ENCODE measurements at regions of chr15 and their contacts with region 1.

Region 1: DNA sequence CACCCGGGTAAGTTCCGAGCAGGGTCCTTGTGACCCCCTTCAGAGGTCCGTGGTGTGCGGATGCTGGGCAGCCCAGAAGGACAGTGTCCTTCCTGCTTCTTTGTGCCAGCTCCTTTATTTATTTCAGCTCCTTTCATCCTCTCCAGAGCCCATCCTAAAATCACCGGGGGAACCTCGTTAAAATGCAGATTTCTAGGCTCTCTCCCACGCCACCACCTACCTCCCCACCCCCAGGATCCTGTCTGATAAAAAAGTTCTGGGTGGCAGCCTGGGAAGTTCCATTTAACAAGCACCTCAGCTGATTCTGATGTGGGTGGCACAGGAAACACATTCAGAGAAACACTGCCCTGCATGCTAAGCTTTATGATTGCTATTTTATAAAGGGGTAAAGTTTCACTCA is 12.5 kb upstream of the IGF1R start:
- DNase-seq: no peak
- H3K4me3 ChIP-seq: no peak overlapping the region
- H3K27ac ChIP-seq: no peak overlapping the region
- H3K4me1 ChIP-seq: no peaks in the 10 kb centered on the region
- H3K27me3 ChIP-seq: no peaks in the 10 kb centered on the region
- CTCF ChIP-seq: no peak
- EP300 ChIP-seq: no peak
- POLR2A ChIP-seq: no peak
- RAD21 ChIP-seq: no peak

Region 2: DNA sequence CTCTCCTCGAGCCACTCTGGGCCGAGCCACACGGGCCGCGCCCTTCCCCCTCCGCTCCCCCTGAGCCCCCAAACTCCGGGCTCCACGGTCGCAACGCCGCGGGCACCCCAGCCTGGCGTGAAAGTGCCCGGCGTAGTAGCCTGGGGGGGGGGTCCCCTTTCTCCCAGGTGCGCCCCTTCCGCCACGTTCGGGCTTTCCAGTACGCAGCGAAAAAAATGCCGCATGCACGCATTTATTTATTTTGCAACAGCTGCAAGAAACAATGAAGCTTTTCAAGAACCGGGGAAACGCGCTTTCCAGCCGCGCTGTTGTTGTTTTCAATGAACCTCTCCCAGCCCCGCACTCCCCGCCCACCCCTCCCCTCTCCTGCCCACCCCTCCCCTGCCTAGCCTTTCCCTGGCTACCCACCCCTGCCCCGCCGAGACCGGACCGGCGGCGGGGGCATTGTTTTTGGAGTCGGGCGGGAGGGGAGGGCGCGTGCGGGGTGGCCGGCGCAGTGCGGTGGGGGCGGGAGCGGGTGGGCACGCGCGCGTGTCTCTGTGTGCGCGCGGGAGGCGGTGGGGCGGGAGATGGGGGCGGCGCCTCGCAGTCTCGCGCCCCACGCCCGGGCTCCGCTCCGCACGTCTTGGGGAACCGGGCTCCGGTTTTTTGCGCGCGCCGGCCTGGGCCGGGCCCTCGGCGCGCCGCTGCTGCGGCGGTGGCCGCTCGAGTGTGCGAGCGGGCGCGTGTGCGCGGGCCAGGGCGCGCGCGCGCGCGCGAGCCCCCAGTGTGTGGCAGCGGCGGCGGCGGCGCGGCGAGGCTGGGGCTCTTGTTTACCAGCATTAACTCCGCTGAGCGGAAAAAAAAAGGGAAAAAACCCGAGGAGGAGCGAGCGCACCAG is 12.2 kb after region 1 on chr15 and contains the start of gene IGF1R:
- CTCF ChIA-PET with region 1: interaction called, 14 read pairs
- POLR2A ChIA-PET with region 1: interaction called, 8 read pairs
- DNase-seq: peak in 1 of 2 experiments; percentile 89
- H3K4me3 ChIP-seq: peak within 1 kb of the TSS; percentile 64 to 89 (median 83)
- H3K27ac ChIP-seq: peak within 1 kb of the TSS; percentile 85
- H3K4me1 ChIP-seq: peaks cover 1 to 6% (median 4%) of the 10 kb centered on the region in 4 experiments; a peak in 3 of 7 replicates
- H3K27me3 ChIP-seq: no peaks in the 10 kb centered on the region
- CTCF ChIP-seq: no peak
- EP300 ChIP-seq: no peak
- POLR2A ChIP-seq: no peak
- RAD21 ChIP-seq: no peak
- total RNA-seq, gene IGF1R: 106 and 109 TPM in 2 replicates

Region 3: GRCh38 chr15:98719137-98719740 is 83.4 kb after region 1 on chr15:
- CTCF ChIA-PET with region 1: no interaction called
- POLR2A ChIA-PET with region 1: no interaction called
- DNase-seq: no peak
- H3K4me3 ChIP-seq: peak overlapping the region in 1 of 4 experiments; percentile 24; a peak in 1 of 8 replicates
- H3K27ac ChIP-seq: no peak overlapping the region
- H3K4me1 ChIP-seq: peaks cover 6 to 45% (median 37%) of the 10 kb centered on the region in 4 experiments
- H3K27me3 ChIP-seq: no peaks in the 10 kb centered on the region
- CTCF ChIP-seq: no peak
- EP300 ChIP-seq: no peak
- POLR2A ChIP-seq: no peak
- RAD21 ChIP-seq: no peak

Region 4: DNA sequence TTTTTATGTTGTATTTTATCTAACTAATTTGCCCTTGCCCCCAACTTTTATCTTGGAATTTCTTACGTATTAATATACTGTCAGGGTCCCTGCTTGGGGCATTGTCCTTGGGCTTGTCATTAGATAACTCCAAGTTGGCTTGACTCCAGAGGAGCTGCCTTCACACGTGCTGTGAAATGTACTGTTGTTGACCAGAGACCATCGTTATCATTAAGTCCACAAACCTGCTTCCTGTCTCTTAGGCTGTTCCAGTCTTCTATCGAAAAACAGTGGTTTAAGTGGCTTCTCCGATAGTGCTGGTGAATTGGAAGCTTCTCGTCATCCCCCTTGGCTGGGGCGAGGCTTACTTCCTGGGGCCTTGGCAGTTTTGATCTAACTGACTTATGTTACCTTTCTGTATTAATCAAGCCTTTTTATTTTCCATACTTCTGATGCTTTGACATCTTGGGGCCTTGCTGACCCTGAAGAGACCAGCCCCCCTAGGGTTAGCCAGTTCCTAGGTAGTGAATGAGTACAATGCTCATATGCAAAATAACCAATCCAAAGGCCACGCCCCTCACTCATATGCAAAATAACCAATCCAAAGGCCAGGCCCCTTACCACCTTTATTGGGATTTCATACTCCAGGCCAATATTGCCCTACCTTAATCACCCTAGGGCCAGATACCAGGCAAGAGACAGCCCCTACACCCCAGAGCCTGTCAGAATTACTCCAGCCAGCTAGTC is 177.0 kb after region 1 on chr15:
- CTCF ChIA-PET with region 1: no interaction called
- POLR2A ChIA-PET with region 1: no interaction called
- DNase-seq: no peak
- H3K4me3 ChIP-seq: no peak overlapping the region
- H3K27ac ChIP-seq: 0 out of 2 replicates have a peak overlapping the region, but pooled peaks have one; percentile 2
- H3K4me1 ChIP-seq: peaks cover 4 to 26% (median 12%) of the 10 kb centered on the region in 4 experiments; a peak in 6 of 7 replicates
- H3K27me3 ChIP-seq: no peaks in the 10 kb centered on the region
- CTCF ChIP-seq: no peak
- EP300 ChIP-seq: no peak
- POLR2A ChIP-seq: no peak
- RAD21 ChIP-seq: no peak

Region 5: GRCh38 chr15:99059010-99059981 is 423.4 kb after region 1 on chr15:
- CTCF ChIA-PET with region 1: no interaction called
- POLR2A ChIA-PET with region 1: no interaction called
- DNase-seq: peak; percentile 70 to 86
- H3K4me3 ChIP-seq: peak overlapping the region; percentile 41 to 70 (median 50)
- H3K27ac ChIP-seq: peak overlapping the region; percentile 43; the same call in 1 of the 2 replicates
- H3K4me1 ChIP-seq: peaks cover 0 to 5% (median 0%) of the 10 kb centered on the region in 4 experiments; a peak in 3 of 7 replicates
- H3K27me3 ChIP-seq: 0 out of 7 replicates have a peak, but pooled peaks cover 0 to 9% (median under 1%) of the 10 kb centered on the region in 4 experiments
- CTCF ChIP-seq: peak; percentile 76 to 86 (median 83)
- EP300 ChIP-seq: peak in 1 of 2 experiments; percentile 24; a peak in 1 of 3 replicates
- POLR2A ChIP-seq: peak in 1 of 2 experiments; percentile 71; a peak in 2 of 3 replicates
- RAD21 ChIP-seq: peak; percentile 38 to 77; a peak in 3 of 4 replicates